ENCODE measurements at regions of chr20 and their contacts with region 1.

Region 1: DNA sequence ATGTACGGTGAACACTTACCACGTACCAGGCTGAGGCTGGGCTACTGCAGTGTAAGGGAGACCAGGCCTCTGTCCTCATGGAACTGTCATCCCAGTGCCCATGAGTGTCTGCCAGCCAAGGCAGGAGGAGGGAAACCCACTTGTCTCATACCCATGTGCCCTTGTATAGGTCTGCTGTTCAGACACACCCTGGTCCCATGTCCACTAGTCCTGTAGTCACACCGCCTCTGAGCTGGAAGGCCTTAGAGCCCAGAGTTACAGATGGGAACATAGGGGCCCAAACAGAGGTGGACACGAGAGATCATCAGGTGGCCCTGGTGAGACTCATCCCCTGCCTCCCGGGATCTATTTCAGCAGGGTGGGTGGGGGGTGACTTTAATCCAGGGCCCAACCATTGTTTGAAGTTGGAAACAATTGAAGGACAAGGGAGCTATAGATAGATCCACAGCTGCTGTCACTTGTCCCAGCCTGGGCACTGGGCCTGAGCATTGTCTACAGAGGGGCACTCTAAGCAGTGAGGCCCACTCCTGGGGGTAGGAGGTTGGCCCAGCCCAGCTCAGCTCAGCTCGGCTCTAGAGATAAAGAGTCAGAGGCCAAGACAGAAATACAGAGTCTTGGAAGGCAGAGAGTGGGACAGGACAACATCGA is 14.6 kb downstream of the MYH7B start:
- DNase-seq: no peak
- ATAC-seq: no peak
- H3K4me3 ChIP-seq: no peak overlapping the region
- H3K27ac ChIP-seq: no peak overlapping the region
- H3K4me1 ChIP-seq: peaks cover 5 to 9% of the 10 kb centered on the region in 2 experiments; a peak in 3 of 5 replicates
- H3K27me3 ChIP-seq: no peaks in the 10 kb centered on the region
- CTCF ChIP-seq: no peak
- EP300 ChIP-seq: no peak
- POLR2A ChIP-seq: no peak
- RAD21 ChIP-seq: no peak

Region 2: GRCh38 chr20:34955232-34956040 is 14.9 kb before region 1 on chr20 and contains the starts of genes GSS and MYH7B:
- CTCF ChIA-PET with region 1: no interaction called
- POLR2A ChIA-PET with region 1: interaction called, 12 read pairs
- in situ Hi-C with region 1: no loop called
- intact Hi-C with region 1: no loop called
- DNase-seq: peak; percentile 97 to 99 (median 98)
- ATAC-seq: peak; percentile 95
- H3K4me3 ChIP-seq: peak within 1 kb of the TSS; percentile 55
- H3K27ac ChIP-seq: peak within 1 kb of the TSS; percentile 89
- H3K4me1 ChIP-seq: peaks cover 16 to 22% of the 10 kb centered on the region in 2 experiments; a peak in 4 of 5 replicates
- H3K27me3 ChIP-seq: no peaks in the 10 kb centered on the region
- CTCF ChIP-seq: peak; percentile 61 to 73 (median 68); a peak in 5 of 6 replicates
- EP300 ChIP-seq: no peak
- POLR2A ChIP-seq: peak; percentile 97
- RAD21 ChIP-seq: peak; percentile 65 to 75
- polyA plus RNA-seq, gene GSS: 18.4 to 40.4 TPM
- polyA plus RNA-seq, gene MYH7B: not detected

Region 3: DNA sequence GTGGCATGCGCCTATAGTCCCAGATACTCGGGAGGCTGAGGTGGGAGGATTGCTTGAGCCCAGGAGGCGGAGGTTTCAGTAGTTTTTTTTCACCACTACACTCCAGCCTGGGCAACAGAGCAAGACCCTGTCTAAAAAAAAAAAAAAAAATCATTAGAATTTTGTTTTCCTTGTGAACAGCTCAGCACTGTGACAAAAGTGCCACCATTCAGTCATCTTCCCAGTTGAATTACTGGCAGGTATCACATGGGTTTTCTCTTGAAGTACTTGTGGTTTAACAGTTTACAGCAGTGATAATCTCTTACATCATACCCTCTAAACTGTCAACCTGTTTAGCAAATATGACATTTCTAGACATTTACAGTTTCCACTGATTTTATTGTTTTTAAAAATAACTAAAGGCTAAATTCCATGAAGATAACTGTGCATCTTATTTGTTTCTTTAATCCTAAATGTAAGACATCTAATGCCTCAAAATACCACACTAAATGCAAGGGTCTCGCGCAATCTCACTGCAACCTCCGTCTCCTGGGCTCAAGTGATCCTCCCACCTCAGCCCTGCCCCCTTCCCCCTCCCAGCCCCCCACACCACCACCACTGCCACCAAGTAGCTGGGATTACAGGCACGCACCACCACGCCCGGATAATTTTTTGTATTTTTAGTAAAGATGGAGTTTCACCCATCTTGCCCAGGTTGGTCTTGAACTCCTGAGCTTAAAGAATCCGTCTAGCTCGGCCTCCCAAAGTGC is 115.3 kb after region 1 on chr20:
- CTCF ChIA-PET with region 1: no interaction called
- POLR2A ChIA-PET with region 1: no interaction called
- in situ Hi-C with region 1: no loop called
- intact Hi-C with region 1: no loop called
- DNase-seq: no peak
- ATAC-seq: peak; percentile 73
- H3K4me3 ChIP-seq: no peak overlapping the region
- H3K27ac ChIP-seq: peak overlapping the region; percentile 45; the same call in 2 of the 3 replicates
- H3K4me1 ChIP-seq: peaks cover 0 to 1% of the 10 kb centered on the region in 2 experiments; a peak in 2 of 5 replicates
- H3K27me3 ChIP-seq: no peaks in the 10 kb centered on the region
- CTCF ChIP-seq: no peak
- EP300 ChIP-seq: peak; percentile 83
- POLR2A ChIP-seq: no peak
- RAD21 ChIP-seq: no peak

Region 4: GRCh38 chr20:35135867-35136586 is 165.7 kb after region 1 on chr20:
- CTCF ChIA-PET with region 1: no interaction called
- POLR2A ChIA-PET with region 1: no interaction called
- in situ Hi-C with region 1: no loop called
- intact Hi-C with region 1: no loop called
- DNase-seq: peak in 1 of 4 experiments; percentile 38
- ATAC-seq: no peak
- H3K4me3 ChIP-seq: no peak overlapping the region
- H3K27ac ChIP-seq: no peak overlapping the region
- H3K4me1 ChIP-seq: peaks cover 0 to 4% of the 10 kb centered on the region in 2 experiments; a peak in 2 of 5 replicates
- H3K27me3 ChIP-seq: no peaks in the 10 kb centered on the region
- CTCF ChIP-seq: no peak
- EP300 ChIP-seq: no peak
- POLR2A ChIP-seq: no peak
- RAD21 ChIP-seq: no peak

Measured in K562 (cell line).